T-cell (primary cell): ENCODE measurements at regions of chr13 and their contacts with region 1.

Region 1: DNA sequence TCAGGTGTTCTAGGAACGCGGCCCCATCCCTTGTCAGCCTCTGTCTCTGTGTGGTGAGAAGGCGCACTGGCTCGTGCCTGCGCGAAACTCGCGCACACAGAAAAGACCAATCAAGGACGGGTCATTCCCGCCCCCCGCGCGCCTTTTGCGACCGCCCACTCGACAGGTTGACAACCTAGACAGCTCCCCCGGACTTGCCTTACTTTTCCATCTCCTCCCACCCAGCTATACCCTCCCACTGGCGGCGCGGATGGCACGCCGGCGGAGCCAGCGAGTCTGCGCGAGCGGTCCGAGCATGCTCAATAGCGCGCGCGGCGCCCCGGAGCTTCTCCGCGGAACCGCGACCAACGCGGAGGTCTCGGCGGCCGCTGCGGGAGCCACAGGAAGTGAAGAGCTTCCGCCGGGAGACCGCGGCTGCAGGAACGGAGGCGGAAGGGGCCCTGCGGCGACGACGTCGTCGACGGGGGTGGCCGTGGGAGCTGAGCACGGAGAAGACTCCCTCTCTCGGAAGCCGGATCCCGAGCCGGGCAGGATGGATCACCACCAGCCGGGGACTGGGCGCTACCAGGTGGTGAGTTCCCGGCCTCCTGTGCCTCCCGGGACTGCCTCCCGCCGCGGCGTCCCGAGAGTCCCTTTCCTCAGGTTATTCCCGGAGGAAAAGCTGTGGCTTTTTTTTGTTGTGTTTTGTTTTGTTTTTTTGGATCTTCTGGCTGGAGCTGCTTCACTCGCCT is at the start of gene NDFIP2:
- DNase-seq: peak; percentile 63 to 89 (median 73)
- ATAC-seq: peak; percentile 83 to 84 (median 84)
- H3K4me3 ChIP-seq: peak within 1 kb of the TSS; percentile 82 to 88
- H3K4me3 Mint-ChIP-seq: peak within 1 kb of the TSS; percentile 84 to 96 (median 93)
- H3K27ac ChIP-seq: peak within 1 kb of the TSS; percentile 32
- H3K27ac Mint-ChIP-seq: peak within 1 kb of the TSS; percentile 58 to 71
- H3K4me1 ChIP-seq: peaks cover 12% of the 10 kb centered on the region in 2 experiments
- H3K4me1 Mint-ChIP-seq: peaks cover 45 to 49% (median 46%) of the 10 kb centered on the region in 3 donors
- H3K27me3 ChIP-seq: peaks cover 0 to 3% of the 10 kb centered on the region in 2 experiments
- H3K27me3 Mint-ChIP-seq: no peaks in the 10 kb centered on the region
- total RNA-seq, gene NDFIP2: 3.1 to 6.8 (median 5.0) TPM

Region 2: DNA sequence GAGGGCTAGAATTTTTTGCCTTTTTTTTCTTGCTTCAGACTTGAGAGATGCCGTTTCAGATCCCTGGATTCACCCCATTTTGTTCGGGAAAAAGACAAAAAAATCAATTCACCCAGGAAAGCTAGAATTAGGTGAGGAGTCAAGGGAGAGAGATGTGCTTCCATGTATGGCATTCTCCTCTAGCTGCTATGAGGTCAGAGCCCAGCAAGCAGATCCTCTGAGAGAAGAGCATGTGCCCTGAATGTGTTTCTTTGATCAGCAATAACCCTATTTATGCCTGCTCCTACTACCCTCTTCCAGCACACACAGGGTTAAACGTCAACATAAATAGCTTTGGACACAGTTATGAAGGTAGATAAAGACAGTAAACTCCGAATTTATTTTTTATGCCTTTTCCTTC is 53.5 kb after region 1 on chr13:
- CTCF ChIA-PET with region 1: interaction called, 10 to 25 read pairs
- POLR2A ChIA-PET with region 1: no interaction called
- DNase-seq: no peak
- ATAC-seq: no peak
- H3K4me3 ChIP-seq: no peak overlapping the region
- H3K4me3 Mint-ChIP-seq: no peak overlapping the region
- H3K27ac ChIP-seq: no peak overlapping the region
- H3K27ac Mint-ChIP-seq: no peak overlapping the region
- H3K4me1 ChIP-seq: no peaks in the 10 kb centered on the region
- H3K4me1 Mint-ChIP-seq: peaks cover 1 to 10% (median 7%) of the 10 kb centered on the region in 3 donors
- H3K27me3 ChIP-seq: no peaks in the 10 kb centered on the region
- H3K27me3 Mint-ChIP-seq: no peaks in the 10 kb centered on the region

Region 3: GRCh38 chr13:79541426-79542049 is 60.4 kb after region 1 on chr13:
- CTCF ChIA-PET with region 1: interaction called in 1 of 2 experiments, 25 read pairs
- POLR2A ChIA-PET with region 1: no interaction called
- DNase-seq: peak in 2 of 35 experiments; percentile 36 to 83
- ATAC-seq: peak in 2 of 4 experiments; percentile 55 to 57
- H3K4me3 ChIP-seq: no peak overlapping the region
- H3K4me3 Mint-ChIP-seq: no peak overlapping the region
- H3K27ac ChIP-seq: no peak overlapping the region
- H3K27ac Mint-ChIP-seq: no peak overlapping the region
- H3K4me1 ChIP-seq: no peaks in the 10 kb centered on the region
- H3K4me1 Mint-ChIP-seq: no peaks in the 10 kb centered on the region
- H3K27me3 ChIP-seq: no peaks in the 10 kb centered on the region
- H3K27me3 Mint-ChIP-seq: no peaks in the 10 kb centered on the region